Heart left ventricle (tissue), 16 donors: ENCODE measurements at regions of chr11 and their contacts with region 1.

Region 1: GRCh38 chr11:50333861-50334260 is 301.2 kb downstream of the OR4C45 start:
- DNase-seq: no peak
- ATAC-seq: peak in 1 of 4 donors; percentile 30
- H3K4me3 ChIP-seq: no peak overlapping the region
- H3K27ac ChIP-seq: no peak overlapping the region
- H3K4me1 ChIP-seq: peaks cover 0 to 4% (median 0%) of the 10 kb centered on the region in 12 donors
- H3K27me3 ChIP-seq: no peaks in the 10 kb centered on the region
- CTCF ChIP-seq: no peak
- POLR2A ChIP-seq: no peak

Region 2: GRCh38 chr11:50379484-50379883 is 45.6 kb after region 1 on chr11:
- intact Hi-C with region 1: loop called in 1 of 10 experiments (anchors 10 kb)
- DNase-seq: no peak
- ATAC-seq: no peak
- H3K4me3 ChIP-seq: no peak overlapping the region
- H3K27ac ChIP-seq: no peak overlapping the region
- H3K4me1 ChIP-seq: no peaks in the 10 kb centered on the region
- H3K27me3 ChIP-seq: no peaks in the 10 kb centered on the region
- CTCF ChIP-seq: no peak
- POLR2A ChIP-seq: no peak